Naive thymus-derived CD4-positive, alpha-beta T cell (primary cell): ENCODE measurements at regions of chr2 and their contacts with region 1.

Region 1: DNA sequence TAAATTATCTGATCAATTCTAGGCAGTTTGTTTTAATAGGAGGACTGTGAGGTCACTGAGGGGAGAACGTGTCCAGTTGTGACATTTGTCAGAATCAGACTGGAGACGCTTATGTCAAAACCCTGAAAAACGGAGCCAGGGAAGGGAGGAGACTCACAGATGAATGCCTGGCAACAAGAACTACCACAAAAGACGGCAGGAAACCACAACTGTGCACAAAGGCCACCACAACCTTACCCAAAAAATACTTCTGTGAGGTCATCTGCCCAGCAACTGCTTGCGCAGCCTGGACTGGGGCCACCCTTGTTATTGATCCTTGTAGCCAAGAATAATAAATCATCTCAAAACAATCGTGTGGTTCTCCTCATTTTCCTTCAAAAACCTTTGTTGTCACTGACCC is 173.0 kb upstream of the ALKAL2 start:
- DNase-seq: peak in 8 of 9 donors; percentile 37 to 82 (median 77)
- ATAC-seq: peak; percentile 87
- H3K4me3 ChIP-seq: no peak overlapping the region
- H3K4me3 Mint-ChIP-seq: peak overlapping the region; percentile 52 to 84 (median 78)
- H3K27ac ChIP-seq: no peak overlapping the region
- H3K27ac Mint-ChIP-seq: peak overlapping the region in 7 of 9 donors; percentile 52 to 93 (median 73)
- H3K4me1 ChIP-seq: peaks cover 20 to 21% of the 10 kb centered on the region in 2 donors
- H3K4me1 Mint-ChIP-seq: peaks cover 16 to 36% (median 29%) of the 10 kb centered on the region in 7 donors
- H3K27me3 ChIP-seq: no peaks in the 10 kb centered on the region
- H3K27me3 Mint-ChIP-seq: peaks cover 61 to 86% (median 73%) of the 10 kb centered on the region in 5 donors

Region 2: GRCh38 chr2:437762-438393 is 23.0 kb before region 1 on chr2:
- CTCF ChIA-PET with region 1: no interaction called
- POLR2A ChIA-PET with region 1: no interaction called
- intact Hi-C with region 1: loop called (anchors 1 kb)
- DNase-seq: peak; percentile 35 to 87 (median 80)
- ATAC-seq: peak; percentile 99
- H3K4me3 ChIP-seq: peak overlapping the region; percentile 47
- H3K4me3 Mint-ChIP-seq: peak overlapping the region; percentile 72 to 93 (median 83)
- H3K27ac ChIP-seq: peak overlapping the region; percentile 52
- H3K27ac Mint-ChIP-seq: peak overlapping the region; percentile 66 to 98 (median 95)
- H3K4me1 ChIP-seq: peaks cover 18% of the 10 kb centered on the region in 2 donors
- H3K4me1 Mint-ChIP-seq: peaks cover 14 to 31% (median 24%) of the 10 kb centered on the region in 7 donors
- H3K27me3 ChIP-seq: no peaks in the 10 kb centered on the region
- H3K27me3 Mint-ChIP-seq: peaks cover 0 to 2% (median 0%) of the 10 kb centered on the region in 5 donors

Region 3: DNA sequence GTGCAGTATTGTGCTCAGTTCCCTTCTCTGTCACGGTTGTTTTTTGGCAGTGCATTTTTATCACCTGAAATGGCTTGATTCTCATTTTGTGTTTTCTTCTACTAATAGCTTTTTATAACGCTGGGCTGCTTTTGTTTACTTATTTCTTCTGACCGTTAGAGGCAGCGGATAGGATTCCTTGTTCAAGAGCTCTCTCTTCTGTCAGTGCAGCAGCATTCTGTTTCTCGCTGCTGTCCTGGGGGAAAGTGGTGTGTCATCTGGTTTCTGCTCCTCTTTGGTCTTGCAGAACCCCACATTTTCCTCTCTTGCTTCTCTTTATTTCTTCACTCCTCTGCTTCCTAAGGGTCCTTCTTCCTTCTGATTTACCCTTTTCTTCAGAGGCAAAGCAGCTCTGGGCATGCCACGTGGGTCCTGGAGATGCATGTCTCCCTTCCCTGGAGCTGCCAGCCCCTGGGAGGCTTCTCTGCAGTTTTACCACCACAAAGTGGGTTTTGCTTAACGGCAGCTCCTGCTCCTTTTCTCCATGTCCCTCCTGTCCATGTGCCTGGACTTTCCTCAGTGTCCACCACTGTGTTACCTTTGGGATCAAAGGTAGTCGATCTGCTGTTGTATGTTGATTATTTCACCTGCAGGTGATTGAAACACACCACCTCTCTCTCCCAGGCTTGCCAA is 442.5 kb after region 1 on chr2:
- CTCF ChIA-PET with region 1: no interaction called
- POLR2A ChIA-PET with region 1: no interaction called
- intact Hi-C with region 1: no loop called
- DNase-seq: no peak
- ATAC-seq: no peak
- H3K4me3 ChIP-seq: no peak overlapping the region
- H3K4me3 Mint-ChIP-seq: no peak overlapping the region
- H3K27ac ChIP-seq: no peak overlapping the region
- H3K27ac Mint-ChIP-seq: no peak overlapping the region
- H3K4me1 ChIP-seq: no peaks in the 10 kb centered on the region
- H3K4me1 Mint-ChIP-seq: peaks cover 0 to 4% (median 0%) of the 10 kb centered on the region in 7 donors
- H3K27me3 ChIP-seq: no peaks in the 10 kb centered on the region
- H3K27me3 Mint-ChIP-seq: peaks cover 0 to 22% (median 5%) of the 10 kb centered on the region in 5 donors